Cardiac septum (tissue), 1 donor: ENCODE measurements at regions of chrX and their contacts with region 1.

Region 1: DNA sequence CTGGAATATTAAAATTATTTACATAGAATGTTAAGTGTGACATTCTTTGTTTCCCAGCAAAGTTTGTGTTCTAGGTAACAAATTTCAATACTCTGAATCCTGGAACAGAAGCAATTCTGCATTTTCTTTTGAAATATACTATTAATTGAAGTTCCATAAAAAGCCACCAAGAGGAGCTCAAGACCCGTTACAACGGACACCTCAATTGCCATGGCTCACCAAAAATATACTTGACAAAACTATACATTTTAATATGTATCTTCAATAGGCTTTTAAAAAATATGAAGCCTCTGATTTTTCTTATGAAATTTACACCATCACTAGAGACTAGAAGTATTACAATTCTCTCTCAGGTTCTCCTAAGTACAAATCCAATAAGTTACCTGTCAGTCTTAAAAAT is 111.4 kb downstream of the NYX start:
- DNase-seq: no peak

Region 2: GRCh38 chrX:41759817-41760216 is 201.3 kb after region 1 on chrX:
- intact Hi-C with region 1: loop called (anchors 10 kb)
- DNase-seq: no peak